Endothelial cell of umbilical vein (primary cell): ENCODE measurements at regions of chr6 and their contacts with region 1.

Region 1: DNA sequence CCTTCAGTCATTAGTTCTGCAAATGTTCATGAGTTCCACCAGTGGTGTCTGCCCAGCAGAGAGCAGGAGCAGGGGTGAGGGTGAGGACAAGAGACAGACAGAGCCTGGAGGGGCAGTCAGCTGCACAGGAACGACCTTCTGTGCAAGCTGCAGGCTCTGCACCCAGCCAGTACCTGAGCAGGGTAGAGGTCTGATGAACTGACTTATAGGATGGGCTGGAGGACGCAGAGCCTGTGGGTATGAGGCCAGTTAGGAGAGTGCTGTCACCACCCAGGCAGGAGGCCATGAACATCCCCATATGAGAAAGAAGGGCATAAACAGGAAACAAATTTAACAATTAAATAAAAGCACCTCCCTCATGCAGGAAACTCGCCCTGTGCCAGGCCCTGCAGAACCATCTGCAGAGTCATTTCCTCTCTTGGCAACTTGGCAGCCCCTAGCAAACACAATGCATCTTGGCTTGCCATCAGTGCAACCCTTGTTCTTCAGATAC is 17.9 kb downstream of the C6orf15 start:
- DNase-seq: peak; percentile 88
- H3K4me3 ChIP-seq: peak overlapping the region in 1 of 3 experiments; percentile 23
- H3K27ac ChIP-seq: peak overlapping the region; percentile 41
- H3K4me1 ChIP-seq: peaks cover 41% of the 10 kb centered on the region
- H3K27me3 ChIP-seq: no peaks in the 10 kb centered on the region
- CTCF ChIP-seq: no peak
- POLR2A ChIP-seq: peak; percentile 46

Region 2: DNA sequence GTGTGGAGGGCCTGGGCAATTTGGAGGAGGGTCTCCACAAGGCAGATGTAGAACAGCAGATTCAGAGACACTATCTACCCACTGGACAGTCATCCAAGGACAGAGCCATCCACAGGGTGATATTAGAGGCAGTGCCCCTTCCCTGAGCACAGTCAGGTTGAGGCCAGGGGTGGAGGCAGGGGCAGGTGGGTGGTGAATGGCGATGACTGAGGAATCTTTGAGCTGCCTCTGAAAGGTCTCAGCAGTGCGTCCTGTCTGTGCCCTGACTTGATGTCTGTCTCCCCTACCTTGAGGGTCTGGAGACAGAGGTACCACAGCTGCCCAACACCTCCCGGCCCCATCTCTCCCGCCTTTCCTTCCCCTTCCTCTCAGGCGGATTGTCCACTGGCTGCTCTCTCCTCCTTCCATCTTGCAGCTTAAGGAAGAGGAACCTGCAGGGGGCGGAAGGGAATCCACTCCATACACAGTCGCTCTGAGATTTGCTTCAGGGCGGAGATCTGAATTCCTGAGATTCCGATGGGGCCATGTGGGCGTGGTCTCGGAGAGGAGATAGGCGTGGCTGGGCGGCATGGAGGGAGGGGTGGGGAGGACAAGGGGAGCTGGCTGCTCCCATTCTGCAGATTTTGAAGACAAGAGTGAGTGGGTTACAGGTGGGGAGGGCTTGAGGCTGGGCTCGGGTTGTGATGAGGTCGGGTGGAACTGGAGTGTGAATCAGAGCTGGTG is 151.9 kb before region 1 on chr6:
- CTCF ChIA-PET with region 1: no interaction called
- POLR2A ChIA-PET with region 1: no interaction called
- dilution Hi-C with region 1: no loop called
- intact Hi-C with region 1: no loop called
- DNase-seq: peak; percentile 56
- H3K4me3 ChIP-seq: no peak overlapping the region
- H3K27ac ChIP-seq: no peak overlapping the region
- H3K4me1 ChIP-seq: no peaks in the 10 kb centered on the region
- H3K27me3 ChIP-seq: peaks cover 6 to 16% of the 10 kb centered on the region in 2 experiments
- CTCF ChIP-seq: peak; percentile 55
- POLR2A ChIP-seq: no peak

Region 3: DNA sequence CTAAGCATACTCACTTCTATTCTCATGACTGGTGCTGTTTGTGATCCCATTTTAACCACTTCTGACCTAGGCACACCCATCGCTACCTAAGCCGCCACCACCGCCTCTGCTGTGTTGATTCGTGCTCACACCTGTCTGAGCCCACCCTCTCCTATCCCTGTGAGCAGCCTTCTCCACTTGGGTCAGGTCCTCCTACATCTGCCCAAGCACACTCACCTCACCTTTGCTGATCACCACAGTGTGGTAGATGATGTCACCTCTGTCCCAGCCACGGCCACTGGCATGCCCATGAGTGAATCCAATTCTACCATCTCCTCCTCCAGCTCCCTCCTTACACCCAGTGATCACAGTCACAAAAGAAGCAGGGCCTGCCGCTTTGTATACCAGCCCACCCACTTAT is 63.3 kb before region 1 on chr6:
- CTCF ChIA-PET with region 1: no interaction called
- POLR2A ChIA-PET with region 1: no interaction called
- dilution Hi-C with region 1: no loop called
- intact Hi-C with region 1: no loop called
- DNase-seq: no peak
- H3K4me3 ChIP-seq: no peak overlapping the region
- H3K27ac ChIP-seq: no peak overlapping the region
- H3K4me1 ChIP-seq: no peaks in the 10 kb centered on the region
- H3K27me3 ChIP-seq: peaks cover 2 to 5% of the 10 kb centered on the region in 2 experiments
- CTCF ChIP-seq: no peak
- POLR2A ChIP-seq: no peak

Region 4: GRCh38 chr6:31042806-31043205 is 51.6 kb before region 1 on chr6:
- CTCF ChIA-PET with region 1: no interaction called
- POLR2A ChIA-PET with region 1: no interaction called
- dilution Hi-C with region 1: no loop called
- intact Hi-C with region 1: no loop called
- DNase-seq: peak; percentile 38
- H3K4me3 ChIP-seq: no peak overlapping the region
- H3K27ac ChIP-seq: no peak overlapping the region
- H3K4me1 ChIP-seq: no peaks in the 10 kb centered on the region
- H3K27me3 ChIP-seq: peaks cover 8 to 12% of the 10 kb centered on the region in 2 experiments
- CTCF ChIP-seq: peak; percentile 23 to 69
- POLR2A ChIP-seq: no peak

Region 5: DNA sequence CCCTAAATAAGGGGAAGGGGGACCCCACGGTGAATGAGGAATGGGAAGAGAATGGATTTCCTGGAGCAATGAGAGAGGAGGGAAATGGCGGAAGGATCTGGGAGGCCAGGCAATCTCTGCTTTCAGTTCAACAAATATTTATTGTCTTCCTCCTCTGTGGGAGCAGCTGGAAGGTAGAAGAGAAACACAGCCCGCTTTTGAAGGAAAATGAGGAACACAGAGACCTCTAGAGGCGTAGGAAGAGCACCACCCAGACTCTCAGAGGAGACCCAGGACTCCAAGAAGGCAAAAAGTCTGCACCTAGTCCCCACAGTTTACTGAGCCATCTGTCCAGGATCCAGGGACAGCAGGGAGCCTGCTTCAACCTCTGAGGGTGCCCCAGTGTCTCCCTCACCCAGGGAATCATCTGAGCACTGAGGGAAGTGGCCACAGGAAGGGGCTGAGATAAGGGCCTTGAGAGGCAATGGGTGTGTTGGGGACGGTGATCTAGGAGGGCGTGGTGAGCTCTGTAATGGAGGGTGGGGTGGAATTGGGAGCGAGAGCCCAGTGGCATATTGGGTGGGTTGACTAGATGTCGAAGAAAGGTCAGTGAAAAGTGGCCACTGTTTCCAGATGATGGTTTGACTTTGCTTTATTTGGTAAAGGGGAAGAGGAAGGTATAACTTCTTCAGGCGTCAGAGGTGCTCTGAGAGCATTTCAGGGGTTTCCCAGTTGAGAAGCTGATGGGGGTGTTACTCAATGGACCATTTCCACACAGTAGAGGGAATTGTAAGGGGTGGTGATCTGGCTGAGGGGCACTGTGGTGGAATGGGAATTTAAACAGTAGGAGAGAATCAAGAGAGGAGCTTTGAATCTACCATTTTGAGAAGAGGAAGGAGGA is 20.8 kb after region 1 on chr6:
- CTCF ChIA-PET with region 1: interaction called, 45 read pairs
- POLR2A ChIA-PET with region 1: interaction called, 8 read pairs
- dilution Hi-C with region 1: no loop called
- intact Hi-C with region 1: loop called (anchors 1 kb)
- DNase-seq: peak; percentile 51
- H3K4me3 ChIP-seq: peak overlapping the region in 1 of 3 experiments; percentile 3
- H3K27ac ChIP-seq: peak overlapping the region; percentile 51
- H3K4me1 ChIP-seq: peaks cover 21% of the 10 kb centered on the region
- H3K27me3 ChIP-seq: peaks cover 4 to 6% of the 10 kb centered on the region in 2 experiments
- CTCF ChIP-seq: peak; percentile 13 to 20
- POLR2A ChIP-seq: no peak

Region 6: GRCh38 chr6:31122791-31123706 is 28.6 kb after region 1 on chr6:
- CTCF ChIA-PET with region 1: interaction called, 3 read pairs
- POLR2A ChIA-PET with region 1: interaction called, 3 read pairs
- dilution Hi-C with region 1: no loop called
- intact Hi-C with region 1: loop called (anchors 2 kb)
- DNase-seq: peak; percentile 91
- H3K4me3 ChIP-seq: no peak overlapping the region
- H3K27ac ChIP-seq: peak overlapping the region; percentile 90
- H3K4me1 ChIP-seq: peaks cover 36% of the 10 kb centered on the region
- H3K27me3 ChIP-seq: no peaks in the 10 kb centered on the region
- CTCF ChIP-seq: no peak
- POLR2A ChIP-seq: no peak

Region 7: GRCh38 chr6:31128093-31128676 is 33.8 kb after region 1 on chr6:
- CTCF ChIA-PET with region 1: interaction called, 7 read pairs
- POLR2A ChIA-PET with region 1: no interaction called
- dilution Hi-C with region 1: no loop called
- intact Hi-C with region 1: loop called (anchors 2 kb)
- DNase-seq: peak; percentile 47
- H3K4me3 ChIP-seq: no peak overlapping the region
- H3K27ac ChIP-seq: no peak overlapping the region
- H3K4me1 ChIP-seq: peaks cover 23% of the 10 kb centered on the region
- H3K27me3 ChIP-seq: peaks cover 3 to 6% of the 10 kb centered on the region in 2 experiments
- CTCF ChIP-seq: peak; percentile 80 to 89
- POLR2A ChIP-seq: no peak